ENCODE measurements at regions of chr2 and their contacts with region 1.

Region 1: GRCh38 chr2:132670496-132671150 is 618 bp upstream of the LYPD1 start:
- DNase-seq: peak; percentile 78
- H3K4me3 Mint-ChIP-seq: peak overlapping the region; percentile 85
- H3K27ac Mint-ChIP-seq: peak overlapping the region; percentile 57
- H3K4me1 Mint-ChIP-seq: peaks cover 8% of the 10 kb centered on the region
- H3K27me3 Mint-ChIP-seq: no peaks in the 10 kb centered on the region
- CTCF ChIP-seq: no peak

Region 2: DNA sequence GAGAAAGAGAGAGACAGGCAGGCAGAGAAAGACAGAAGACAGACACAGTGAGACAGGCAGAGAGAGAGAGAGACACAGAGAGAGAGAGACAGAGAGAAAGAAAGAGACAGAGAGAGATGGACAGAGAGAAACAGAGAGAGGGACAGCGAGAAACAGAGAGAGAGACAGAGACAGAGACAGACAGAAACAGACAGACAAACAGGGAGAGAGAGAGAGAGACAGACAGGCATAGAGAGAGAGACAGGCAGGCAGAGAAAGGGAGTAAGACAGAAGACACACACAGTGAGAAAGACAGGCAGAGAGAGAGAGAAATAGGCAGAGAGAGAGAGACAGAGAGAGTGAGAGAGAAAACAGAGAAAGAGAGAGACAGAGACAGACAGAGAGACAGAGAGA is 403.5 kb before region 1 on chr2:
- CTCF ChIA-PET with region 1: no interaction called
- intact Hi-C with region 1: loop called (anchors 5 kb)
- DNase-seq: no peak
- H3K4me3 Mint-ChIP-seq: no peak overlapping the region
- H3K27ac Mint-ChIP-seq: no peak overlapping the region
- H3K4me1 Mint-ChIP-seq: no peaks in the 10 kb centered on the region
- H3K27me3 Mint-ChIP-seq: no peaks in the 10 kb centered on the region
- CTCF ChIP-seq: no peak

Region 3: GRCh38 chr2:132632000-132632649 is 38.5 kb before region 1 on chr2:
- CTCF ChIA-PET with region 1: interaction called, 13 read pairs
- intact Hi-C with region 1: no loop called
- DNase-seq: peak; percentile 7
- H3K4me3 Mint-ChIP-seq: no peak overlapping the region
- H3K27ac Mint-ChIP-seq: no peak overlapping the region
- H3K4me1 Mint-ChIP-seq: peaks cover 15% of the 10 kb centered on the region
- H3K27me3 Mint-ChIP-seq: no peaks in the 10 kb centered on the region
- CTCF ChIP-seq: no peak

Region 4: DNA sequence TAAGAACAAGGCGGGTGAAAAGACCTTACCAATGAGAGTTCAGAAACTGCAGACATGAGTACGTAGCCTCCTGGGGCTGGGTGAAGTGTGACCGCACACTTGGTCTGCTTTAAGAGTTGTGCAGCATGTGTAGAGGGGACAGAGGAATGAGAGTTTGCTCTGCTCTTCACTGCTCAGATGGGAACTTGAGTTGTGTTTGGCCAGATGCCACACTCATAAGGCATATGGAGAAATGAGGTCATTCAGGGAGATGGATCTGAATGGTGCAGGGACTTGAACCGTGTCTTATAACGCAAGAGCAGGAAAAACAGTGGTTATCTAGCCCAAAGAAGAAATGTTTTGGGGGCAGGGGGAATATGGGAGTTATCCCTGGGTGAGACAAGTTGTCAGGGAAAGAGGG is 273.2 kb after region 1 on chr2:
- CTCF ChIA-PET with region 1: no interaction called
- intact Hi-C with region 1: no loop called
- DNase-seq: no peak
- H3K4me3 Mint-ChIP-seq: no peak overlapping the region
- H3K27ac Mint-ChIP-seq: no peak overlapping the region
- H3K4me1 Mint-ChIP-seq: no peaks in the 10 kb centered on the region
- H3K27me3 Mint-ChIP-seq: no peaks in the 10 kb centered on the region
- CTCF ChIP-seq: no peak

Region 5: GRCh38 chr2:132979339-132980093 is 308.9 kb after region 1 on chr2:
- CTCF ChIA-PET with region 1: no interaction called
- intact Hi-C with region 1: loop called (anchors 10 kb)
- DNase-seq: no peak
- H3K4me3 Mint-ChIP-seq: no peak overlapping the region
- H3K27ac Mint-ChIP-seq: peak overlapping the region; percentile 30
- H3K4me1 Mint-ChIP-seq: peaks cover 9% of the 10 kb centered on the region
- H3K27me3 Mint-ChIP-seq: no peaks in the 10 kb centered on the region
- CTCF ChIP-seq: no peak

Region 6: DNA sequence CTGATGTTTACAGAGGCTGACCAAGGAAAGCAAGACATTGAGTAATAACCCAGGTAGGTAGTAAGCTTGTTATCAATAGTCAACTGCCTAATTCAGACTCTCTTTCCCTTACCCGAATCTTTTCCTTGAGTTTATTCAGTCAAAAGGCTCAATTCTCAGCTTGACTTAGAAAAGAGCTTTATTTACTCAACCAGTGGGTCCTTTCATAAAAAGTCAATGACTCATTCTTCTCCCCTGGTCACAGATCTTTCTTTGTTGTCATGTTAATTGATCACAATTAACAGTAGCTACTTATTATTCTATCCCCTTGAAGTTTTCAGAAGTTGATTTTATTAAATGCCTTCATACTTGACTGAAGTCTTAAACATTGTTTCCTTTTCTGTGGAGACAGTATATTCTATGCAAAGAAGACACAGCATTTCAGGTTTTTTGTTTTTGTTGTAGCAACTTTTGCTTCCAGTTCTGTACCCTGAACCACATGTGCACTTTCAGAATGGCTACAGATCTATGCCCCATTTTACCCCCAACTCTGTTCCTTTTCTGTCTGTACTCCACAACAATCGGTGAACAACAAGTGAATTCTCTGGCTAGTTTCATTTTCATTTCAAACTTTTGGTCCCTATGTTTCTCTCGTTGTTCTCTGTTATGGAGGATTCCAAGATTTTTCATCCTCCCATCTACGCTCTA is 469.4 kb after region 1 on chr2:
- CTCF ChIA-PET with region 1: no interaction called
- intact Hi-C with region 1: loop called (anchors 5 kb)
- DNase-seq: no peak
- H3K4me3 Mint-ChIP-seq: no peak overlapping the region
- H3K27ac Mint-ChIP-seq: no peak overlapping the region
- H3K4me1 Mint-ChIP-seq: peaks cover 46% of the 10 kb centered on the region
- H3K27me3 Mint-ChIP-seq: no peaks in the 10 kb centered on the region
- CTCF ChIP-seq: no peak

Region 7: DNA sequence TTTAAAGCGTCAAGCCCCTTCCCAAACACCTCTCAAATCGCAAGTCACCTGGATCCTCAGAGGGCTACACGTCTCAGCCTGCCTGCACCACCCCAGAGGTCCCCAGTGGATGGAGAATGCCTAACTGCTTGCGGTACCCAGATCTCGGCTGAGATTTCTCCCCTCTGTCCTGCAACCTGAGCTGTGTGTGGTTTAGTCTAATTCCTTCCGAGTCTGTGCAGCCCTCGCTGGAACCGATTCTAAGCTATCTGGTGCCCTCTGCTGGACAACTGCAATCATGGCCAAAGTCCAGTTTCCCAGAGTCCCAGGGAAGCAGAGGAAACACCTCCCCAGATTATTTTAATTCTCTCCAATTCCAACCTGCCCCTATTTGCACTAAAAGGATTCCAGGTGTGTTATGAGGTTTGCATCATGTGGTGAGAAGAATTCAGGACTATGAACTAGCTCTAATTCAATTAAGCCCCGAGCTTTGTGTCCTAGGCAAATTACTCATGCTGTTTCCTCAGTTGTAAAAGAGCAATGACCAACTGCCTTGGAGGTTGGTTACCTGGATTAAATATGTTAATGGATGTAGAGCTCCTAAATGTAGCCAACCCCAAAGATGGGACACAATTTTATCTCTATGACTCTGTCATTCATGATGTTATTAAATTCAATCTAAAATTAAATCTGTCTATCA is 1173.7 kb after region 1 on chr2:
- CTCF ChIA-PET with region 1: no interaction called
- intact Hi-C with region 1: loop called (anchors 10 kb)
- DNase-seq: peak; percentile 77
- H3K4me3 Mint-ChIP-seq: no peak overlapping the region
- H3K27ac Mint-ChIP-seq: no peak overlapping the region
- H3K4me1 Mint-ChIP-seq: peaks cover 29% of the 10 kb centered on the region
- H3K27me3 Mint-ChIP-seq: no peaks in the 10 kb centered on the region
- CTCF ChIP-seq: peak; percentile 82